ENCODE measurements at regions of chr14 and their contacts with region 1.

Region 1: GRCh38 chr14:67571272-67571850 is 28.7 kb downstream of the PIGH start:
- DNase-seq: peak; percentile 80
- ATAC-seq: peak; percentile 89
- H3K4me3 ChIP-seq: no peak overlapping the region
- H3K4me3 Mint-ChIP-seq: no peak overlapping the region
- H3K27ac ChIP-seq: no peak overlapping the region
- H3K27ac Mint-ChIP-seq: peak overlapping the region; percentile 1
- H3K4me1 ChIP-seq: no peaks in the 10 kb centered on the region
- H3K4me1 Mint-ChIP-seq: no peaks in the 10 kb centered on the region
- H3K27me3 ChIP-seq: no peaks in the 10 kb centered on the region
- H3K27me3 Mint-ChIP-seq: peaks cover 5% of the 10 kb centered on the region
- CTCF ChIP-seq: peak; percentile 83

Region 2: GRCh38 chr14:67440541-67440940 is 130.8 kb before region 1 on chr14:
- CTCF ChIA-PET with region 1: interaction called, 863 read pairs
- POLR2A ChIA-PET with region 1: no interaction called
- intact Hi-C with region 1: no loop called
- DNase-seq: no peak
- ATAC-seq: no peak
- H3K4me3 ChIP-seq: no peak overlapping the region
- H3K4me3 Mint-ChIP-seq: no peak overlapping the region
- H3K27ac ChIP-seq: no peak overlapping the region
- H3K27ac Mint-ChIP-seq: no peak overlapping the region
- H3K4me1 ChIP-seq: no peaks in the 10 kb centered on the region
- H3K4me1 Mint-ChIP-seq: no peaks in the 10 kb centered on the region
- H3K27me3 ChIP-seq: peaks cover 0 to 4% (median 0%) of the 10 kb centered on the region in 4 experiments
- H3K27me3 Mint-ChIP-seq: peaks cover 22% of the 10 kb centered on the region
- CTCF ChIP-seq: no peak

Region 3: GRCh38 chr14:67487937-67488893 is 83.1 kb before region 1 on chr14 and contains the start of gene TMEM229B:
- CTCF ChIA-PET with region 1: interaction called, 23 read pairs
- POLR2A ChIA-PET with region 1: no interaction called
- intact Hi-C with region 1: no loop called
- DNase-seq: peak; percentile 94
- ATAC-seq: peak; percentile 83
- H3K4me3 ChIP-seq: peak within 1 kb of the TSS; percentile 24 to 66 (median 55)
- H3K4me3 Mint-ChIP-seq: peak within 1 kb of the TSS; percentile 84
- H3K27ac ChIP-seq: peak within 1 kb of the TSS; percentile 97 to 98
- H3K27ac Mint-ChIP-seq: peak within 1 kb of the TSS; percentile 96
- H3K4me1 ChIP-seq: peaks cover 70 to 77% of the 10 kb centered on the region in 2 donors
- H3K4me1 Mint-ChIP-seq: peaks cover 83% of the 10 kb centered on the region
- H3K27me3 ChIP-seq: no peaks in the 10 kb centered on the region
- H3K27me3 Mint-ChIP-seq: no peaks in the 10 kb centered on the region
- CTCF ChIP-seq: peak; percentile 25
- total RNA-seq, gene TMEM229B: 4.2 and 6.9 TPM in 2 replicates

Region 4: DNA sequence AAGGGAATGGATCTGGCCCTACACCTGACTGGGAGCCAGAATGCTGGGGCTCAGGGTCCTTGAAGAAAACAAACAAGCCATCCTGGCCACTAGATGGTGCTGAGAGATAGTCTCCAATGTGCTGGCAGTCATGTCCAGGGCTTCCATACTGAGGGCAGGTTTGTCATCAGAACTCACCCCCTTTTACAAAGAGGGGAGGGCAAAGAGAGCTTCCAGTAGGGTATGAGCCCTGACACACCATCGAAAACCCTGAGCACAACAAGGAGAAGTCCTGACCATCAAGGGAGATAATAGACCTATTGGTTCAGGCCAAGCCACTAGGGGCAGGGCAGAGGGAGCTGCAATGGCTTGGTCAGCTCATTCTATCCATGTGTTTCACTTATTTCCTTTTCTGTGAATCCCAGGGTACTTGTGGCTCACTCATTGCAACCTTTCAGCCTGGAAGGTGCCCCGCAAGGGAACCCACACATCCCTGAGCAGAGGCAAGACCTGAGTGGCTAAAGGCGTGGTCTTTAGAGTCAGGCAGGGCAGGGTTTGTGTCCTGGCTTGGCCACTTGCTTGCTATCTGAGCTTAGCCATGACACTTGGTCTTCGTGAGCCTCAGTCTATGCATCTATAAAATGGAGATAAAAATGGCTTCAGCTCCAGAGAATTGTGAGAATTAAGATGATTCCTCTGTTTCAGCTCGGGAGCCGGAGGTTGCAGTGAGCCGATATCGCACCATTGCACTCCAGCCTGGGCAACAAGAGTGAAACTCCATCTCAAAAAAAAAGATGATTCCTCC is 44.5 kb before region 1 on chr14:
- CTCF ChIA-PET with region 1: interaction called, 65 read pairs
- POLR2A ChIA-PET with region 1: no interaction called
- intact Hi-C with region 1: loop called (anchors 2 kb)
- DNase-seq: peak; percentile 56
- ATAC-seq: peak; percentile 78
- H3K4me3 ChIP-seq: no peak overlapping the region
- H3K4me3 Mint-ChIP-seq: no peak overlapping the region
- H3K27ac ChIP-seq: no peak overlapping the region
- H3K27ac Mint-ChIP-seq: peak overlapping the region; percentile 21
- H3K4me1 ChIP-seq: peaks cover 0 to 4% of the 10 kb centered on the region in 2 donors
- H3K4me1 Mint-ChIP-seq: peaks cover 2% of the 10 kb centered on the region
- H3K27me3 ChIP-seq: peaks cover 0 to 42% (median 18%) of the 10 kb centered on the region in 4 experiments
- H3K27me3 Mint-ChIP-seq: peaks cover 56% of the 10 kb centered on the region
- CTCF ChIP-seq: peak; percentile 60

Region 5: DNA sequence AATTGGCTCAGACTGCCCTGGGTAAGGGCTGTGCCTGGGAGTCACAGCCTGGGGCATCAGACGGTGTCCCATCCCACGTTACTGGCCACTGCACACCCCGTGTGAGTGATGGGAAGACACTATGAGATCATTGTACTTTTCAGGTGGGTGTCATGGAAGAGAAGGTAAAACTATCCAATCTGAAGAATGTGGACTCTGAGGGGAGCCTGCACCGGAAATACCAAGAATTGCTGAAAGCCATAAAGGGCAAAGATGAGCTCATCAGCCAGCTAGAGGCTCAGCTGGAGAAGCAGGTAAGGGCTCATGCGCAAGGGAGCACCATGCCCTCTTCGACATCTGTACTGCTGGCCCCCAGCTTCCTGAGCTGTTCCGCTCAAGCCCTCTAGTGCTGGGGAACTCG is 14.2 kb before region 1 on chr14:
- CTCF ChIA-PET with region 1: interaction called, 27 read pairs
- POLR2A ChIA-PET with region 1: no interaction called
- intact Hi-C with region 1: no loop called
- DNase-seq: no peak
- ATAC-seq: no peak
- H3K4me3 ChIP-seq: no peak overlapping the region
- H3K4me3 Mint-ChIP-seq: no peak overlapping the region
- H3K27ac ChIP-seq: no peak overlapping the region
- H3K27ac Mint-ChIP-seq: no peak overlapping the region
- H3K4me1 ChIP-seq: no peaks in the 10 kb centered on the region
- H3K4me1 Mint-ChIP-seq: no peaks in the 10 kb centered on the region
- H3K27me3 ChIP-seq: no peaks in the 10 kb centered on the region
- H3K27me3 Mint-ChIP-seq: peaks cover 8% of the 10 kb centered on the region
- CTCF ChIP-seq: no peak

Region 6: DNA sequence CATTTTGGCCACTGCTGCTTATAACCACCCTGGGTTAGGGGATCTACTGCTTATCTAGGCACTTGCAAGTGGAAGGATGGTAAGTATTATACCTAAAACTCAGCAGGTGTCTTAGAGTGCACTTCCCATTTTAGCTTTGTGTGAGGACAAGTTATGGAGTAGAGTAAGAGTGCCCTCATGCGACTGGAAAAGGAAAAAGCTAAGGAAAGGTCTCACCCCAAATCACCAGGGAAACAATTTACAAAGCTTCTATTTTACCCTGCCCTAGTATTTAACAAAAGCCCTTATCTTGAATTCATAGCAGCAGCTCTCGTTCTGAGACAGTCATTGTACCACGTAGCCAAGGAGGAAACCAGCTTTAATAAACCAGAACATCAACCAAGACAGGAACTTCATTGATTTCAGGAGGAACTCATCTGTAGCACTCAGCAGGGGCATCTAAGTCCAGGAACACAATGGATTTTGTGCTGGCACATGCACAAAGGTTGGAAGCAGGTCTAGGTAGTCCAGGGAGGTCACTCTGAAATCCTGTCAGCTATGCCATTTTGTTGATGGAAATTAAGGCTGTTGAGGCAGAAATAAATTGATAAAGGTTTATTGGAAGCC is 133.2 kb after region 1 on chr14:
- CTCF ChIA-PET with region 1: interaction called, 392 read pairs
- POLR2A ChIA-PET with region 1: no interaction called
- intact Hi-C with region 1: no loop called
- DNase-seq: peak; percentile 77
- ATAC-seq: peak; percentile 78
- H3K4me3 ChIP-seq: no peak overlapping the region
- H3K4me3 Mint-ChIP-seq: no peak overlapping the region
- H3K27ac ChIP-seq: no peak overlapping the region
- H3K27ac Mint-ChIP-seq: no peak overlapping the region
- H3K4me1 ChIP-seq: peaks cover 2% of the 10 kb centered on the region in 2 donors
- H3K4me1 Mint-ChIP-seq: peaks cover 4% of the 10 kb centered on the region
- H3K27me3 ChIP-seq: no peaks in the 10 kb centered on the region
- H3K27me3 Mint-ChIP-seq: peaks cover 8% of the 10 kb centered on the region
- CTCF ChIP-seq: peak; percentile 72

Measured in B cell (primary cell).